MCF 10A (cell line): ENCODE measurements at regions of chr20 and their contacts with region 1.

Region 1: GRCh38 chr20:49484180-49485140 is 2.0 kb upstream of the KCNB1 start:
- DNase-seq: peak; percentile 84
- H3K4me3 Mint-ChIP-seq: peak overlapping the region; percentile 69
- H3K27ac Mint-ChIP-seq: no peak overlapping the region
- H3K4me1 Mint-ChIP-seq: peaks cover 7% of the 10 kb centered on the region
- H3K27me3 Mint-ChIP-seq: peaks cover 16% of the 10 kb centered on the region
- CTCF ChIP-seq: peak; percentile 84

Region 2: GRCh38 chr20:48188657-48189551 is 1295.6 kb before region 1 on chr20:
- CTCF ChIA-PET with region 1: no interaction called
- POLR2A ChIA-PET with region 1: no interaction called
- intact Hi-C with region 1: no loop called
- DNase-seq: peak; percentile 68
- H3K4me3 Mint-ChIP-seq: no peak overlapping the region
- H3K27ac Mint-ChIP-seq: no peak overlapping the region
- H3K4me1 Mint-ChIP-seq: peaks cover 23% of the 10 kb centered on the region
- H3K27me3 Mint-ChIP-seq: no peaks in the 10 kb centered on the region
- CTCF ChIP-seq: peak; percentile 37

Region 3: GRCh38 chr20:49328790-49329189 is 155.7 kb before region 1 on chr20:
- CTCF ChIA-PET with region 1: interaction called, 174 read pairs
- POLR2A ChIA-PET with region 1: interaction called, 6 read pairs
- intact Hi-C with region 1: no loop called
- DNase-seq: no peak
- H3K4me3 Mint-ChIP-seq: no peak overlapping the region
- H3K27ac Mint-ChIP-seq: no peak overlapping the region
- H3K4me1 Mint-ChIP-seq: no peaks in the 10 kb centered on the region
- H3K27me3 Mint-ChIP-seq: peaks cover 33% of the 10 kb centered on the region
- CTCF ChIP-seq: no peak

Region 4: DNA sequence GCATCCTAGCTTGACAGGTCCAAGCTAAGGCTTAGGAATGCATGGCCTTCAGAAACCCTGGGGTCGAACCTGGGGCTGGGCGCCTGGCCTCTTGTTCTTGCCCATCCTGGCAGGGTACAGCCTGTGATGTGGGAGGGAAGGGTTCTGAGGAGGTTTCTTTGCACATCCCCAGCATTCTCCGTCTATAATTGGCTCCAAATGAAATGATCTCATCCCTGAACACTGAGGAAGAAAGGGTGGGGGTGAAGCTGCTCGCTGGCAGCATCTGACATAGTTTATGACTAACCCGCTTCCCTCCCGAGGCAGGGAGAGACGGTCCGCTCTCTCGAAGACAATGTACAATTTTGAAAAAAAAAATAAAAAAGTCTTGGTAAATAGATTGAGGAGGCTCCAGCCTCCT is 139.5 kb before region 1 on chr20:
- CTCF ChIA-PET with region 1: interaction called, 56 read pairs
- POLR2A ChIA-PET with region 1: interaction called, 21 read pairs
- intact Hi-C with region 1: no loop called
- DNase-seq: peak; percentile 92
- H3K4me3 Mint-ChIP-seq: peak overlapping the region; percentile 50
- H3K27ac Mint-ChIP-seq: peak overlapping the region; percentile 91
- H3K4me1 Mint-ChIP-seq: peaks cover 44% of the 10 kb centered on the region
- H3K27me3 Mint-ChIP-seq: no peaks in the 10 kb centered on the region
- CTCF ChIP-seq: no peak

Region 5: DNA sequence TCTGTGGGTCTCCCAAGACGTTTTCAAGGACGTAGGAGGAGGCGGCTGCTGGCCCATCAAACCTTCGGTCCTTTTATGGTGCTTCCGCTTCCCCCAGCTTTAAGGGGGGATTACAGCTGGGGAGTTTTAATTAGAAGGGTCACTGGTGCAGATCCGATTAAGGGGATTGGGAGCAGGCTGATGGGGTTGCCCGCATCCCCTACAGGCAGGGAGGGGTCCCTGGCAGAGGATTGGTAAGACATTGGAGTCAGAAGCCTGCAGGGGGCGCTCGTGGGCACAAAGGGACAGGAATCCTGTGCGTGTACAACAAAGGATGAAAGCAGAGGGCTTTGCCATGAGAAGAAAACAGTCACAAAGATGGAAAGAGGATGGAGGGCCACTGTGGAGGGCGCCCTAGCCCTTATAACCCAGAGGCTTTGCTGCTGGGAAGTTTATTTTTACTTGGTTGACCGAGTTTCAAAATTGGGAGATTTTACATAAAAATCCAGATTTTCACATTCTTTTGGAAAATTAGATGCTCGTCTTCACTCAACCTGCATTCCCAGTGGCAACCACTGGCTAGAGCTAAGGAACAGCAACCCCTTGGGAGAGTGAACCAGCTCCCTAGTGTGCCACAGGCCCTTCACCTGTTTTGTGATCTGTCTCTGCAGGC is 99.9 kb before region 1 on chr20:
- CTCF ChIA-PET with region 1: interaction called, 18 read pairs
- POLR2A ChIA-PET with region 1: interaction called, 10 read pairs
- intact Hi-C with region 1: loop called (anchors 1 kb)
- DNase-seq: peak; percentile 83
- H3K4me3 Mint-ChIP-seq: no peak overlapping the region
- H3K27ac Mint-ChIP-seq: no peak overlapping the region
- H3K4me1 Mint-ChIP-seq: peaks cover 57% of the 10 kb centered on the region
- H3K27me3 Mint-ChIP-seq: no peaks in the 10 kb centered on the region
- CTCF ChIP-seq: peak; percentile 59

Region 6: DNA sequence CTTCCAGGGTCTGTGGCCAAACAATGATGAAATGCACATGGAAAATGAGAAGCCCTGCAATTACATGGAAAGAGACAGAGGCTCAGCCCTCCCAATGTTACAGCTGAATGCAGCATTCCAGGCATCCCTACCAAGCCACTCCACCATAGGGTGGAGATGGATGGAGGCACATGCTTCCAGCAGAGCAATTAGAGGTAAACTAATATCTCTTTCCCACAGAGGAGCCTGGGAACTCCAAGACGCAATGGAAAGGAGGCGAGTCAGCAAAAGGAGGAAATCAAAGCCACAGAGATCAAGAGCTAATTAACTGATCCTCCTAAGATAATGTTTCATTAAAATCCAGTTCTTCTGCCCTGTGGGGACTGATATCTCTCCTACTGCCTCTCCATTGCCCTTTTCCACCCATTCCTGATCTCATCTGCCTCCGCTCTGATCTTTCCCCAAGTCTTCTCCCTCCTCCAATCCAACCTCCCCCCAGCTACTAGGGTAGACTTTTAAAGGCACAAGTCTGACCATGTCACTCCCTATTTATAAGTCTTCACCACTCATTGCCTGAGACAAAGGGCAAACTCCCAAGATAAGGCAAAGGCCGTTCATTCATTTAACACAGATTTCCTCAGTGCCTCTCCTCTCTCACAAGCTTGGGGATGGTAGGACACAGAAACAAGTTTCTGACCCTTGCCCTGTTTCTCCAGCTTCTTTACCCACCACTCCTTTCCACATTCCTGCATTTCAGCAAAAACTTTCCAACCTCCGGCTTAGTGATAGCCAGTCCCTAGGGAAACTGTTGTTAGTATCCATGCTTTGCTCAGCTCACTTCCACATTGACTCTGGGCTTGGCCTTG is 12.3 kb after region 1 on chr20:
- CTCF ChIA-PET with region 1: interaction called, 20 read pairs
- POLR2A ChIA-PET with region 1: interaction called, 3 read pairs
- intact Hi-C with region 1: no loop called
- DNase-seq: no peak
- H3K4me3 Mint-ChIP-seq: no peak overlapping the region
- H3K27ac Mint-ChIP-seq: no peak overlapping the region
- H3K4me1 Mint-ChIP-seq: no peaks in the 10 kb centered on the region
- H3K27me3 Mint-ChIP-seq: peaks cover 21% of the 10 kb centered on the region
- CTCF ChIP-seq: no peak

Region 7: DNA sequence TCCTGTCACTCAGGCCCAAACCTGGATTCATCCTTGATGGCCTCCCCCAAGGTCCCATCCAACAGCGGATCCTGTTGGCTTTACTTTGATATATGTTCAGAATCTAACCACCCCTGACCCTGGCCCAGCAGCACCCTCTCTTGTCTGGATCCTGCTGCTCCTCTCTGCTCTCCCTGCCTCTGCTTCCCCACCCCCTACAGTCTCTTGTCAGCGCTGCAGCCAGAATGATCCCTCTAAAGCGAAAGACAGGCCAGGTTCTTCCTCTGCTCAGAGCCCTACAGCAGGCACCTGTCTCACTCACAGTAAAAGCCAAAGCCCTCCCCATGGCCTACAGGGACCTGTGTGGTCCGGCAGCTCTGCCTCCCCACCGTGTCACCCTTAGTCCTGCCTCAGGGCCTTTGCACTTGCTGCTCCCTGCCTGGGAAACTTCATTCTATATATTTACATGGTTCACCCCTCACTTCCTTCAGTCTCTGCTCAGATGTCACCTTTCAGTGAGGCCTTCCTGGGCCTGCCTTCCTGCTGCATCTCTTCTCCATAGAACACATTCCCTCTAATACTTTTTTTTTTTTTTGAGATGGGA is 35.4 kb after region 1 on chr20:
- CTCF ChIA-PET with region 1: interaction called, 12 read pairs
- POLR2A ChIA-PET with region 1: no interaction called
- intact Hi-C with region 1: no loop called
- DNase-seq: no peak
- H3K4me3 Mint-ChIP-seq: no peak overlapping the region
- H3K27ac Mint-ChIP-seq: no peak overlapping the region
- H3K4me1 Mint-ChIP-seq: no peaks in the 10 kb centered on the region
- H3K27me3 Mint-ChIP-seq: no peaks in the 10 kb centered on the region
- CTCF ChIP-seq: no peak